Natural killer cell (primary cell): ENCODE measurements at regions of chr6 and their contacts with region 1.

Region 1: GRCh38 chr6:28880894-28881780 is 42.6 kb downstream of the TRIM27 start:
- DNase-seq: peak; percentile 60 to 74
- ATAC-seq: no peak
- H3K4me3 ChIP-seq: peak overlapping the region; percentile 32
- H3K4me3 Mint-ChIP-seq: peak overlapping the region; percentile 93
- H3K27ac ChIP-seq: no peak overlapping the region
- H3K27ac Mint-ChIP-seq: peak overlapping the region; percentile 84 to 96
- H3K4me1 ChIP-seq: peaks cover 31% of the 10 kb centered on the region
- H3K4me1 Mint-ChIP-seq: peaks cover 32 to 33% of the 10 kb centered on the region in 2 donors
- H3K27me3 ChIP-seq: peaks cover 6% of the 10 kb centered on the region
- H3K27me3 Mint-ChIP-seq: peaks cover 15 to 20% of the 10 kb centered on the region in 2 donors
- CTCF ChIP-seq: no peak

Region 2: DNA sequence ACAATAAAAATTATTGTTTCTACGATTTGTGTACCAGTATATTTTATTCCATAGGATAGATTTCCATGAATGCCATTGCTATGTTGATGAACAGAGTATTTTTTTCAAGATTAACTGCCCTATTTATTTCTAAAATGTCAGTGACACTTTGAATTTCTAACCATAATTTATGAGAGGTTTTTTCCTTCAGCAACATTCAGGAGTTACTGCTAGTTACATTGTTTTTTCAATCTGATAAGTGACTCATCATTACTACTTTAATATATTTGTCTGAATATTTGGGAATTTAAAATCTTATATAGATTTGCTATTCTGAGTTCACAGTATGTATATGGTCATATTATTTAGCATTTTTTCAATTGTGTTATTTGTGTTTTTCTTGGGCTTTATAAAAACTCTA is 930.1 kb before region 1 on chr6:
- intact Hi-C with region 1: no loop called
- DNase-seq: no peak
- ATAC-seq: no peak
- H3K4me3 ChIP-seq: no peak overlapping the region
- H3K4me3 Mint-ChIP-seq: no peak overlapping the region
- H3K27ac ChIP-seq: no peak overlapping the region
- H3K27ac Mint-ChIP-seq: no peak overlapping the region
- H3K4me1 ChIP-seq: no peaks in the 10 kb centered on the region
- H3K4me1 Mint-ChIP-seq: no peaks in the 10 kb centered on the region
- H3K27me3 ChIP-seq: peaks cover 15% of the 10 kb centered on the region
- H3K27me3 Mint-ChIP-seq: peaks cover 25 to 68% of the 10 kb centered on the region in 2 donors
- CTCF ChIP-seq: no peak

Region 3: GRCh38 chr6:28764014-28764723 is 117.0 kb before region 1 on chr6:
- intact Hi-C with region 1: no loop called
- DNase-seq: no peak
- ATAC-seq: no peak
- H3K4me3 ChIP-seq: no peak overlapping the region
- H3K4me3 Mint-ChIP-seq: no peak overlapping the region
- H3K27ac ChIP-seq: no peak overlapping the region
- H3K27ac Mint-ChIP-seq: no peak overlapping the region
- H3K4me1 ChIP-seq: no peaks in the 10 kb centered on the region
- H3K4me1 Mint-ChIP-seq: no peaks in the 10 kb centered on the region
- H3K27me3 ChIP-seq: peaks cover 41% of the 10 kb centered on the region
- H3K27me3 Mint-ChIP-seq: peaks cover 63 to 70% of the 10 kb centered on the region in 2 donors
- CTCF ChIP-seq: no peak

Region 4: GRCh38 chr6:28895134-28895812 is 14.1 kb after region 1 on chr6:
- intact Hi-C with region 1: loop called (anchors 1 kb)
- DNase-seq: peak; percentile 84 to 96
- ATAC-seq: peak; percentile 66 to 84 (median 74)
- H3K4me3 ChIP-seq: peak overlapping the region; percentile 72
- H3K4me3 Mint-ChIP-seq: peak overlapping the region; percentile 97
- H3K27ac ChIP-seq: peak overlapping the region; percentile 96
- H3K27ac Mint-ChIP-seq: peak overlapping the region; percentile 99
- H3K4me1 ChIP-seq: peaks cover 13% of the 10 kb centered on the region
- H3K4me1 Mint-ChIP-seq: peaks cover 24 to 25% of the 10 kb centered on the region in 2 donors
- H3K27me3 ChIP-seq: no peaks in the 10 kb centered on the region
- H3K27me3 Mint-ChIP-seq: no peaks in the 10 kb centered on the region
- CTCF ChIP-seq: no peak

Region 5: DNA sequence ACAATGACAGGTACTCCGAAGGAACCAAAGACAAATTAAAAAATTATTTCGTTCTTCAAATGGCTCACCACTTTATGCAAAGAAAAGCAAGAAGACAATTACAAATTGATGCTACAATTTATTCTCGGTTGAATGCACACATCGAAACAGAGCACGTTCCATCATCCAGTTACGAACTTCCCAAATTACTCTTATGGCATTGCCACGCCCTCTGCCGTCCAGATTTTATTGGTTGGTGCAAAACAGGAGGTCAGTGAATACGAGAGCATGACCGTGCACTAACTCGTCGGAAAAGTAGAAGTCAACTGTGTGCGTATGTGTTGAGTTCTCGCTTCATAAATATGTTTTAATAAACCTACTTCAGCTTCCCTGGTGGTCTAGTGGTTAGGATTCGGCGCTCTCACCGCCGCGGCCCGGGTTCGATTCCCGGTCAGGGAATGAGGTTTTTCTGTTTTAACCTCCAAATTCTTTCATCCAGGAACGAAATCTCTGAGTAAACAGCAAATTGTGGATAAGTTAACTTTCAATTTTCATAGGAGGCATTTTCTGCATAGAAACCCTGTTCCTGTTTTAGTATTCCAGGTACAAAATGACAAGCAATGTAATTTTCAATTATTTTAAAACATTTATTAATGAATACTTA is 100.8 kb after region 1 on chr6:
- intact Hi-C with region 1: loop called (anchors 1 kb)
- DNase-seq: peak; percentile 68 to 89
- ATAC-seq: peak; percentile 72 to 86 (median 73)
- H3K4me3 ChIP-seq: peak overlapping the region; percentile 86
- H3K4me3 Mint-ChIP-seq: peak overlapping the region; percentile 97
- H3K27ac ChIP-seq: peak overlapping the region; percentile 28
- H3K27ac Mint-ChIP-seq: peak overlapping the region; percentile 95 to 99
- H3K4me1 ChIP-seq: peaks cover 19% of the 10 kb centered on the region
- H3K4me1 Mint-ChIP-seq: peaks cover 66 to 67% of the 10 kb centered on the region in 2 donors
- H3K27me3 ChIP-seq: peaks cover 24% of the 10 kb centered on the region
- H3K27me3 Mint-ChIP-seq: peaks cover 41 to 68% of the 10 kb centered on the region in 2 donors
- CTCF ChIP-seq: no peak